ENCODE measurements at regions of chr1 and their contacts with region 1.

Region 1: DNA sequence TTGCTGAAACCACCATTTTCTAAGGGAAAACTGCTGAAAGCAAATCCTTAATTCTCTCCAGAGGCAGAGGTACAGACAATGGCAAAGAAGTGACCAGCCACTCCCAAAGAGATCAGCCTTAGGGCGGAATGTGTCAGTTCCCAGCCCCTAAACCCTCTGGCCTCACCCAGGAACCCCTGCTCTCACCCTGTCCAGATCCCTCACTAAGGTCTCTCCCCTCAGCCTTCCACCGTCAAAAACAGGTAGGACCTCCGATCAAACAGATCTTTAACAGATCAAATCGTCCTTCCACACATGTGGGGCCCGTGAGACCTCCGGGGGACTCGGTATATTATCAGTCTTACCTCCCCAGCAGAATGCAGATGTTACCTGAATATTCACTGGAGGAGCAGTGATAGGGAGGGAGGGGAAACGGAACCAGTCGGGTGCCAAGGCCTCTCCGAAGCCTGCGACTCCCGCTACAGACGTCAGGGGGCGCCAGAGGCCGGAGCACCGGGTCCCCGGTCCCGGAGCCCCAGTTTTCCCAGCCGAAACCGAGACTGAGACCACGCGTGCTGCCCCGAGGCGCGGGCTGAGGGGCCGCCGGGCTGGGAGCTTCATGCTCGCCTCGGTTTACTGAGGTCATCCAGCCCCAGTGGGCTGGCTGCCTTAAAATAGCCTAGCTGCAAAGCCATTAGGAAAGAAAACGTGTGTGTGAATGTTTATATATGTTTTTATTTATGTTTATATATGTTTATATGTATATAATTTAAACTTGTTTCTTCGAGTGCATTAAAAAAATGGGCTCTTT is 23.6 kb downstream of the GPA33 start:
- DNase-seq: peak; percentile 83
- H3K4me3 ChIP-seq: peak overlapping the region; percentile 21
- H3K27ac ChIP-seq: no peak overlapping the region
- H3K4me1 ChIP-seq: no peaks in the 10 kb centered on the region
- H3K27me3 ChIP-seq: no peaks in the 10 kb centered on the region
- CTCF ChIP-seq: peak; percentile 95

Region 2: GRCh38 chr1:167086033-167086432 is 19.5 kb after region 1 on chr1:
- CTCF ChIA-PET with region 1: no interaction called
- POLR2A ChIA-PET with region 1: no interaction called
- intact Hi-C with region 1: no loop called
- DNase-seq: no peak
- H3K4me3 ChIP-seq: no peak overlapping the region
- H3K27ac ChIP-seq: no peak overlapping the region
- H3K4me1 ChIP-seq: no peaks in the 10 kb centered on the region
- H3K27me3 ChIP-seq: peaks cover 3% of the 10 kb centered on the region
- CTCF ChIP-seq: no peak

Region 3: DNA sequence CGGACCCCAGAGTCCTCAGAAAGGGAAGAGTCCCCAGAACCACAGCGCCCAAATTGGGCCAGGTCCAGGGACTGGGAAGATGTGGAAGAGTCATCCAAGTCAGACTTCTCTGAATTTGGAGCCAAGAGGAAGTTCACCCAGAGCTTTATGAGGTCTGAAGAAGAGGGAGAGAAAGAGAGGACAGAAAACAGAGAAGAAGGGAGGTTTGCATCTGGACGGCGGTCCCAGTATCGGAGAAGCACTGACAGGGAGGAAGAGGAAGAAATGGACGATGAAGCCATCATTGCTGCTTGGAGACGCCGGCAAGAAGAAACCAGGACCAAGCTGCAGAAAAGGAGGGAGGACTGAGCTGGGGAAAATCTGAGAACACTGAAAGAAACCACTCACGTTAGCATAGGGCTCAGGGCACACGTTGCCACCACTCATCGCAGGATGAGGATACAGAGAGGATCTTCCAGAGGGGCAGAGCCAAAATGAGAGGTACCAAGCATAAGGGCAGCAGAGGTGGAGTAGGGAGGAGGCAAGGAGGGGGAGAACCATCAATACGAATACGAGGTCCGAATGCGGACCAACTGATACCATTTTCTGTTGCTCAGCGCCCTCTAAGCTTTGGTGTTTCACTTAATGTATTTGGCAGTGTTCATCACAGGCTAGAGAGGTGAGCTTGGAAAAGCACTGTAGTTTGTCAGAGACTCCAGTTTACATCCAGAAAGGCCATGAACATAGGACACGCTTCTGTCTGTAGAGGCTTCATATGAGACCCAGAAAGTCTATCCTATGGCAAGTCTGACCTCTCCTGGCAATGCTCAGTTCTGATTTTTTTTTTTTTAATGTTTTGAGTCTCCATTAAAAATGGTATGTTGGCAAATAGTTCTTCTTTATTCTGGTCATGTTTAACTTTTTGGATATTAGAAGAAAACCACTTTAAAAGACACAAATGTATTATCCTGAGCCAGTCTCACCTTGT is 62.0 kb after region 1 on chr1:
- CTCF ChIA-PET with region 1: no interaction called
- POLR2A ChIA-PET with region 1: no interaction called
- intact Hi-C with region 1: loop called (anchors 2 kb)
- DNase-seq: peak; percentile 18
- H3K4me3 ChIP-seq: no peak overlapping the region
- H3K27ac ChIP-seq: no peak overlapping the region
- H3K4me1 ChIP-seq: no peaks in the 10 kb centered on the region
- H3K27me3 ChIP-seq: no peaks in the 10 kb centered on the region
- CTCF ChIP-seq: peak; percentile 27; the same call in 1 of the 2 replicates

Region 4: DNA sequence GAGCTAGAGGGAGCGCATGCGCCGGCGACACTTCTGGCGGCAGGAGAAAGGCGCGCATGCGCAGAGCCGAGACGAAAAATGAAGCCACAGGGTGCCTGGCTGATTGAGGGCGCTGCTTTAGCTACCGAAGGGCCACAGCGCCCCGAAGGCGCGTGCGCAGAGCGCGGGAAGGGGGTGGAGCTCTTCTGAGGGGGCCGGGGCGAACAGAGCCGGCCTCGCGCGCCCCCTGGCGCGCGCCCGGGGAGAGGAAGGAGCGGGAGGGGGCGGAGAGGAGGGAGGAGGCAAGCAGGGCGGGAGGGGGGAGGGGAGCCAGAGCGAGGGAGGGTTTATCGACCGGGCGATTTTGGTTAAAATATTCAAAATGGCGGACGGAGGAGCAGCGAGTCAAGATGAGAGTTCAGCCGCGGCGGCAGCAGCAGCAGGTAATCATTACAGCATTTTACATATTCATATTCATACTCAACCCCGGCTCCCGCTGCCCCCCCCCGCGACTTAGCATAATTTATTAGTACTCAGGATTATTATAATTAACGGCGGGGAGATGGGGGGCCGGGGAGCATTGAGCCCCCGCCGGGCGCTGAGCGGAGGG is 154.1 kb after region 1 on chr1 and contains the start of gene POU2F1:
- CTCF ChIA-PET with region 1: interaction called, 17 read pairs
- POLR2A ChIA-PET with region 1: no interaction called
- intact Hi-C with region 1: loop called (anchors 1 kb)
- DNase-seq: peak; percentile 99
- H3K4me3 ChIP-seq: peak within 1 kb of the TSS; percentile 81
- H3K27ac ChIP-seq: peak within 1 kb of the TSS; percentile 97
- H3K4me1 ChIP-seq: peaks cover 22% of the 10 kb centered on the region
- H3K27me3 ChIP-seq: no peaks in the 10 kb centered on the region
- CTCF ChIP-seq: peak; percentile 84
- total RNA-seq, gene POU2F1: 25.0 and 28.3 TPM in 2 replicates

Region 5: GRCh38 chr1:167533851-167534300 is 467.3 kb after region 1 on chr1:
- CTCF ChIA-PET with region 1: no interaction called
- POLR2A ChIA-PET with region 1: no interaction called
- intact Hi-C with region 1: loop called (anchors 1 kb)
- DNase-seq: peak; percentile 72
- H3K4me3 ChIP-seq: no peak overlapping the region
- H3K27ac ChIP-seq: no peak overlapping the region
- H3K4me1 ChIP-seq: no peaks in the 10 kb centered on the region
- H3K27me3 ChIP-seq: no peaks in the 10 kb centered on the region
- CTCF ChIP-seq: peak; percentile 93

Region 6: DNA sequence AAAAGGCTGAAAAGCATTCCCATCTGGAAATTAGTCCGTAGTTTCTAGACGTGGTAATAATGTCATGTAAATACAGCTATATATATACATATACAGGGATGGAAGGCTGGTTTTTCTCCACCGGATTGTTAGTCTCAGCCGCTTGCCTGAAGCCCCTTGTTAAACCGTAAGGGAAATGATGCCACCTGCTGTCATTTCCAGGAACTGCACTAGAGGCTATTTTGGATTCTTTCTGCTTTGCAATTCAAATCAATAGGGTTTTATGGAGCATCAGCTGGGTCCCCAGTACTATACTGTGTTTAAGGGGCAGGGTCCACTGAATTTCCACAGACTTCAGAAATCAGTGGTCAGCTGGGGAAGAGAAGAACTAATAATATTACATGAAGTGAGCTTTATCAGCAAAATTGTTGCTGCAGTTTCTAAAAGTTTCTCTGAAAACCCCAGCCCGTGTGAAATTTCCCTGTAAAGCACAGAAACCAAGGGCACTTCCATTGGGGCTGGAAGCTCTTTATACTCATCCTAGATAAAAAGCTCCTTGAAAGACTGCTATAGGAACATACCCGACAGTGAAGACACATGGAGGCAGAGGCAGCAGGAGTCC is 621.5 kb after region 1 on chr1:
- CTCF ChIA-PET with region 1: no interaction called
- POLR2A ChIA-PET with region 1: no interaction called
- intact Hi-C with region 1: loop called (anchors 10 kb)
- DNase-seq: peak; percentile 85
- H3K4me3 ChIP-seq: no peak overlapping the region
- H3K27ac ChIP-seq: no peak overlapping the region
- H3K4me1 ChIP-seq: no peaks in the 10 kb centered on the region
- H3K27me3 ChIP-seq: no peaks in the 10 kb centered on the region
- CTCF ChIP-seq: peak; percentile 92